ENCODE measurements at regions of chr11 and their contacts with region 1.

Region 1: GRCh38 chr11:20221566-20221965 is 61.3 kb upstream of the DBX1 start:
- DNase-seq: no peak
- H3K4me3 ChIP-seq: no peak overlapping the region
- H3K27ac ChIP-seq: no peak overlapping the region
- H3K4me1 ChIP-seq: no peaks in the 10 kb centered on the region
- H3K27me3 ChIP-seq: no peaks in the 10 kb centered on the region
- CTCF ChIP-seq: no peak
- POLR2A ChIP-seq: no peak

Region 2: DNA sequence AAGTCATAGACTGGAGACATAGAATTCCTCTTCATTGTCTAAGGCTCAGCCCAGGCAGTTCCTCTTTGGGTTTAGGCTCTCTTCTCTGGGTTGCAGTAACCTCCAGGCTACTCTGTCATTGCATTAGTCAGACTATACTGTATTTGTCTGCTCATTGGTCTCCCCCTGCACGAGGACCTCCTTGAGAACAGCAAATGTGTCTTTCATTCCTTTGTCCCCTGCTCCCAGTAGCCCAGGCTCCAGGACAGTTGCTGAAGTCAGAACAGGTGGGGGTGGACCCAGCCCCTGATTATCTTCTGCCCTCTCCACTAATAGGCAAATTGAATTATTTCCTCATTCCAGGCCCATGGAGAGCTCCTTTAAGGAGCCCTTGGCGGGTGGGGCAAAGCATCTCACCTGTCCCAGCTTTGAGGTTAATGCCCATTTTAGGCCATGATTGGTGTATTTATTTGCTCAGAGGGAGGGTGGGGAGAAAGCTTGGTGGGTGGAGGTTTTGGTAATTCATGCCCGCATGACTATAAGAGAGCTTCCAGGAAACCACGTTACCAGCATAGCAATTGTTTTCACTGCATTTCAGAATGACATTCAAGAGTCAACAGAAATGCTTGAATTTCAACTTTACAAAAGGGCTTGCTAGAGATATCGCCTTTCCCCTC is 468.0 kb before region 1 on chr11:
- intact Hi-C with region 1: loop called (anchors 5 kb)
- DNase-seq: no peak
- H3K4me3 ChIP-seq: no peak overlapping the region
- H3K27ac ChIP-seq: no peak overlapping the region
- H3K4me1 ChIP-seq: no peaks in the 10 kb centered on the region
- H3K27me3 ChIP-seq: no peaks in the 10 kb centered on the region
- CTCF ChIP-seq: no peak
- POLR2A ChIP-seq: no peak

Region 3: GRCh38 chr11:20207781-20208621 is 13.6 kb before region 1 on chr11:
- intact Hi-C with region 1: no loop called
- DNase-seq: no peak
- H3K4me3 ChIP-seq: no peak overlapping the region
- H3K27ac ChIP-seq: no peak overlapping the region
- H3K4me1 ChIP-seq: no peaks in the 10 kb centered on the region
- H3K27me3 ChIP-seq: peaks cover 0 to 35% of the 10 kb centered on the region in 2 donors
- CTCF ChIP-seq: no peak
- POLR2A ChIP-seq: no peak

Region 4: DNA sequence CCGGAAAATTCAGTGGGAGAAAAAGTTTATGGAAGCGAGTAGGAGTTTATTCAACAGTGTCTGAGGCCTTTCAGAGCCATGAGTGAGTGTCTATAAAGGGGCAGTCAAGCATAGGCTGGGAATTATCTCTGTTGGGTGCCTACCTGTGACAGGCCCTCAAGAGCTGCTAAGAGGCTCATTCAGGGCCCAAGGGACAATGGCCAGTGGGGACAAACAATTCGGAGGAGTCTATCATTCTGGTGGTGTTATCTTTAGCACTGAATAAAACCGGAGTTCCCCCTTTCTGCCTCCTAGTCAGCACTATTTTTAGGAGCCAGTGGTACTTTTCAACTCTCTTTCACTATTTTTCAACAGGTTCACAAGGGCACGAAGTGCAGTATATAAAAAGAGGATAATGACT is 52.5 kb after region 1 on chr11:
- intact Hi-C with region 1: no loop called
- DNase-seq: no peak
- H3K4me3 ChIP-seq: no peak overlapping the region
- H3K27ac ChIP-seq: no peak overlapping the region
- H3K4me1 ChIP-seq: no peaks in the 10 kb centered on the region
- H3K27me3 ChIP-seq: peaks cover 0 to 5% of the 10 kb centered on the region in 2 donors
- CTCF ChIP-seq: no peak
- POLR2A ChIP-seq: no peak